ENCODE measurements at regions of chr13 and their contacts with region 1.

Region 1: GRCh38 chr13:111216166-111216960 is 101.3 kb downstream of the ARHGEF7 start:
- DNase-seq: peak; percentile 47
- H3K4me3 ChIP-seq: no peak overlapping the region
- H3K27ac ChIP-seq: no peak overlapping the region
- H3K4me1 ChIP-seq: peaks cover 31% of the 10 kb centered on the region
- CTCF ChIP-seq: peak; percentile 68

Region 2: GRCh38 chr13:111066544-111066943 is 149.8 kb before region 1 on chr13:
- CTCF ChIA-PET with region 1: no interaction called
- POLR2A ChIA-PET with region 1: no interaction called
- intact Hi-C with region 1: loop called (anchors 2 kb)
- DNase-seq: no peak
- H3K4me3 ChIP-seq: no peak overlapping the region
- H3K27ac ChIP-seq: no peak overlapping the region
- H3K4me1 ChIP-seq: no peaks in the 10 kb centered on the region
- CTCF ChIP-seq: no peak

Region 3: DNA sequence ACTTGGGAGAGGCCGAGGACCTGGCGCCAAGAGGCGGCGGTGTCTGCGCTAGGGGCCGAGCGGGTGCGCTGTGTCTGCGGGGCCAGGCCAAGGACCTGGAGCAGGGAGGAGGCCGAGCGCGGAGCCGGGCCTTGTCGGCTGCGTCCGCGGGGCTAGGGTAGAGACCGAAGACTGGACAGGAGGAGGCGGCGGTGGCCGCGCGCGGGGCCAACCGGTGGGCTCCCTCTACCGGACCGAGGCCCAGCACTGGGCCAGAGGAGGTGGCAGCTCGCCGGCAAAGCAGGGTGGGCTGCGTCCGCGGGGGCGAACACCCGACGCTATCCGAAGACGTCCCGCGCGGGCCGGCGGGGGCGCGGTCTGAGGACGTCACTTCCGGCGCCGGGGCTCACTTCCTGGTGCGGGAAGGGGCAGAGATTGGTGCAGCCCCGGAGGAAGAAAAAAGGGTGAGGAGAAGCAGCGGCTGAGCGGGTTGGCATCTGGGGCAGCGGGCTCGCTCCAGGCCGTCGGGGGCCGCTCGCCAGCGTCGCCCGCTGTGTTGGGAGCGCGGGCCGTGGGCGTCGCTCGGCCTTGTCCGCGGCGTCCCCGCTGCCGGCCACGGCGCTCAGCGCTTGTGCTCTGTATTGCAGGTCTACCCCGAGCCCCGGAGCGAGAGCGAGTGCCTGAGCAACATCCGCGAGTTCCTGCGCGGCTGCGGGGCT is 62.9 kb before region 1 on chr13:
- CTCF ChIA-PET with region 1: no interaction called
- POLR2A ChIA-PET with region 1: interaction called, 4 read pairs
- intact Hi-C with region 1: loop called (anchors 1 kb)
- DNase-seq: peak; percentile 81
- H3K4me3 ChIP-seq: peak overlapping the region; percentile 83
- H3K27ac ChIP-seq: peak overlapping the region; percentile 69
- H3K4me1 ChIP-seq: peaks cover 17% of the 10 kb centered on the region
- CTCF ChIP-seq: no peak

Region 4: GRCh38 chr13:111241006-111241755 is 24.8 kb after region 1 on chr13:
- CTCF ChIA-PET with region 1: no interaction called
- POLR2A ChIA-PET with region 1: no interaction called
- intact Hi-C with region 1: no loop called
- DNase-seq: no peak
- H3K4me3 ChIP-seq: no peak overlapping the region
- H3K27ac ChIP-seq: no peak overlapping the region
- H3K4me1 ChIP-seq: no peaks in the 10 kb centered on the region
- CTCF ChIP-seq: no peak

Measured in OCI-LY7 (cell line).